Activated CD8-positive, alpha-beta T cell treated with anti-CD3 and anti-CD28 coated beads for 36 hours (primary cell): ENCODE measurements at regions of chr20 and their contacts with region 1.

Region 1: GRCh38 chr20:63381807-63382322 is 20.7 kb upstream of the CHRNA4 start:
- DNase-seq: peak; percentile 27
- ATAC-seq: peak; percentile 65
- H3K4me3 Mint-ChIP-seq: no peak overlapping the region
- H3K27ac Mint-ChIP-seq: no peak overlapping the region
- H3K4me1 Mint-ChIP-seq: no peaks in the 10 kb centered on the region
- H3K27me3 Mint-ChIP-seq: peaks cover 11% of the 10 kb centered on the region
- CTCF ChIP-seq: peak; percentile 99

Region 2: DNA sequence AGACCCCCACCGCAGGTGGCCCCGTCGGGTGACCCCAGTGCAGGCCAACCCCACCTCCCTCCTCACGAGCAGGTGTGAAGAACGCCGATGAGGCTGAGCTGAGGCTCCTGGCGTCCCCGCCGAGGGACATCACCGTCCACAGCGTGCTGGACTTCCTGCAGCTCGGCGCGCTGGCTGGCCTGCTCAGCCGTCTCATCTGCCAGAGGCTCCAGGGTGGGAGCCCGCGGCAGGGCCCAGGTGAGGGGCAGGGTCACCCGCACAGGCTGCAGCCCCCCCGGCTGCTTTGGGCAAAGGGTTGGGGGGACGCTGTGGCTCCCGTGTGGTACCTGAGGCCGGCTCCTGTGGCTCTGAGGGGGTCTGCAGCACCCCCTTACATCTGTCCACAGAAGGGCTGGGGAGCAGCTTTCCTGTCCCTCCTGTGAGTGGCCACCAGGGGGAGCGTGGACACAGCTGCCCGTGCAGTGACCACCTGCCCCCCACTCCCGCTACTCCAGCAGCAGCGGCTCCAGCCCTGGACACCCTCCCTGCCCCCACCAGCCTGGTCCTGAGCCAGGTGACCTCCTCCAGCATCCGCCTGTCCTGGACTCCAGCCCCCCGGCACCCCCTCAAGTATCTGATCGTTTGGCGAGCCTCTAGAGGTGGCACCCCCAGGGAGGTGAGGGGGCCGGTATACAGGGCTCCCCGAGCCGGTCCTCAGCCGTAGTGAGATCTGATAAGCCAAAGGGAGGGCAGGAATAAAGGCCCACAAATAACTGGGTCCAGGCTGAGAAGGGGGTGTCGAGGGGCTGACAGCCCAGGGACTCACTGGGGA is 72.4 kb before region 1 on chr20:
- CTCF ChIA-PET with region 1: interaction called, 42 read pairs
- POLR2A ChIA-PET with region 1: no interaction called
- intact Hi-C with region 1: loop called (anchors 5 kb)
- DNase-seq: peak; percentile 44
- ATAC-seq: peak; percentile 74
- H3K4me3 Mint-ChIP-seq: no peak overlapping the region
- H3K27ac Mint-ChIP-seq: no peak overlapping the region
- H3K4me1 Mint-ChIP-seq: no peaks in the 10 kb centered on the region
- H3K27me3 Mint-ChIP-seq: peaks cover 9% of the 10 kb centered on the region
- CTCF ChIP-seq: peak; percentile 84

Region 3: DNA sequence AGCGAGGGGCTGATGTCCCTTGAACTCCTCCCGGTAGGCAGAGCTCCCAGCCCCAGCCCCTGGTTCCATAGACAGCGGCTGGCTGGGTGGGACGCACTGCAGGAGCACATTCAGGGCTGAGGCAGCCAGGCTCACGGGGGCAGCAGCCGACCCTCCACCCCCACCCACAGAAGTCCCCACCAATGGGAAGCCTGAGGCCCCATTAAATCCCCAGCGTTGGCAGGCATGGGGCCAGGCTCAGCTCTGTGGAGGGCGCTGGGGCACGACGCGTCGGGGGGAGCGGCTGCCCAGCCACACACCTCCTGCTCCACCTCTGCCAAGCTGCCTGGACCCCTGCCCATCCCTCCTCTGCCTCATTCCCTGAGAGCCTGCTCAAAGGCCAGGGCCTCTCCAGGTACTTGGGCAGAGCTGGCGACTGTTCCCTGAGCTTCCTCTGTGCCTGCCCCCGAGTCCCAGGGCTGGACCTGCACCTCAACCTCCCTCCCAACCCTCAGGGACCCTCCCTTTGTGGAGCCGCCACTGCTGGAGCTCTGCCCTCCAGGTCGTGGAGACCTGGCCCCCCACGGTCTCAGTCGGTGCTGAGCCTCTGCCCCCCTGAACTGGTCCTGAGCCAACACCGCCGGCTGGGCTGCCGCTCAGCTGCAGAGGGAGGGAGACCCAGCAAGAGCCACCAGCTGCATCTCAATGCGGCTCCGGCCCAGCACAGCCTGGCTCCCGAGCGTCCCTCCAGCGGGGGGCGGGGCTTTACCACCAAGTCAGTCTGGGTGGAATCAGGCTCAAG is 29.9 kb before region 1 on chr20:
- CTCF ChIA-PET with region 1: no interaction called
- POLR2A ChIA-PET with region 1: no interaction called
- intact Hi-C with region 1: no loop called
- DNase-seq: no peak
- ATAC-seq: no peak
- H3K4me3 Mint-ChIP-seq: no peak overlapping the region
- H3K27ac Mint-ChIP-seq: no peak overlapping the region
- H3K4me1 Mint-ChIP-seq: no peaks in the 10 kb centered on the region
- H3K27me3 Mint-ChIP-seq: no peaks in the 10 kb centered on the region
- CTCF ChIP-seq: no peak

Region 4: GRCh38 chr20:63587776-63588591 is 206.1 kb after region 1 on chr20:
- CTCF ChIA-PET with region 1: no interaction called
- POLR2A ChIA-PET with region 1: no interaction called
- intact Hi-C with region 1: no loop called
- DNase-seq: no peak
- ATAC-seq: no peak
- H3K4me3 Mint-ChIP-seq: no peak overlapping the region
- H3K27ac Mint-ChIP-seq: no peak overlapping the region
- H3K4me1 Mint-ChIP-seq: peaks cover 11% of the 10 kb centered on the region
- H3K27me3 Mint-ChIP-seq: no peaks in the 10 kb centered on the region
- CTCF ChIP-seq: no peak